Activated CD4-positive, alpha-beta memory T cell treated with anti-CD3 and anti-CD28 coated beads for 36 hours (primary cell): ENCODE measurements at regions of chr11 and their contacts with region 1.

Region 1: DNA sequence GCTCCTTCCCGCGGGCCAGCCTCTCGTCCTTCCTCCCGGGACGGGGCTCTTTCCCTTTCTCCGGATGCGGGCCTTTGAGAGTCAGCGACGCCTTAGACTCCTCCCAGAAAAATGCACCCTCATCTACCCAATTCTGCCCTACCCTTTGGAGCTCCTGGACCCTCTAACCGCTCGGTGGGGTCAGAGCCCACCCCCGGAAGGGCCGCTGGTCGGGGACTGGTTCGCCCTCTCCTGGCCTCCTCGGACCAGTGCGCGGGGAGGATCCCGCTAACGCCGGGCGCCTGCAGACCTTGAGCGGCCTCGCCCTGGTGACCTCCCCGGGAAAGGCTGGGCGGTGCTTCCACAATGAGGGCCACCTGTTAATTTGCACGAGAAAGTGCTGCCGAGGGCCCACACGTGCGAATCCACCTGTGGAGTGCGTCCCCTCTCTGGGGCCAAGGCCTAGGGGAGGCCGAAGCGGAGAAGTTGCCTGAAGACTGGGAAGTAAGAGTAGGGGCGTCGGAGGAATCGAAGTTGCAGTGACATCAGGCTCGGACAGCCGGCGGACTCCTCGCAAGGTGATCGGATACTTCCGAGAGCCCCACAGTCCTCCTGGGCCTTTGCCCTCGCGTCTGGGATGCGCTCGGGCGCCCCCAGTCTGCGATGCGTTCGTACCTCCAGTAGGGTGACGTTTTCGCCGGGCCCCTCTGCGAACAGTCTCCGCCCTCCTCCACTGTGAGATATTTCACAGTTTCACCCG is 61.5 kb downstream of the ENDOD1 start:
- DNase-seq: peak; percentile 95
- H3K4me3 Mint-ChIP-seq: peak overlapping the region; percentile 81
- H3K27ac Mint-ChIP-seq: peak overlapping the region; percentile 88
- H3K4me1 Mint-ChIP-seq: peaks cover 36% of the 10 kb centered on the region
- H3K27me3 Mint-ChIP-seq: no peaks in the 10 kb centered on the region

Region 2: DNA sequence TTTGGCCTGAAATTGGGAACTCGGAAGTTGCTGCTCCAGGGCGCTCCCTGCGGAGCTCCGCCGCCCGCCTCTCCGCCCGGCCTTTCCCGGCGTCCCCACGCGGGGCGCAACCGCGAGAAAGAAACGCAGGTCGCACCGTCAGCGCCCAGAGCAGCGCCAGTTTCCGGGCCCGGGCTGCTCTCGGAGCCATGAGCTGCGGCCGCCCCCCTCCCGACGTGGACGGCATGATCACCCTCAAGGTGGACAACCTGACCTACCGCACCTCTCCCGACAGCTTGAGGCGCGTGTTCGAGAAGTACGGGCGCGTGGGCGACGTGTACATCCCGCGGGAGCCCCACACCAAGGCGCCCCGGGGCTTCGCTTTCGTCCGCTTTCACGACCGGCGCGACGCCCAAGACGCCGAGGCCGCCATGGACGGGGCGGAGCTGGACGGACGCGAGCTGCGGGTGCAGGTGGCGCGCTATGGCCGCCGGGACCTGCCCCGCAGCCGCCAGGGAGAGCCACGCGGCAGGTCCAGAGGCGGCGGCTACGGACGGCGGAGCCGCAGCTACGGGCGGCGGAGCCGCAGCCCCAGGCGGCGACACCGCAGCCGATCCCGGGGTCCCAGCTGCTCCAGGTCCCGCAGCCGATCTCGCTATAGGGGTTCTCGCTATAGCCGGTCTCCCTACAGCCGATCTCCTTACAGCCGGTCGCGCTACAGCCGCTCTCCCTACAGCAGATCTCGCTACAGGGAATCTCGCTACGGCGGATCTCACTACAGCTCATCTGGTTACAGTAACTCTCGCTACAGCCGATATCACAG is 83.9 kb before region 1 on chr11:
- CTCF ChIA-PET with region 1: interaction called, 130 read pairs
- POLR2A ChIA-PET with region 1: interaction called, 18 read pairs
- intact Hi-C with region 1: loop called (anchors 1 kb)
- DNase-seq: peak; percentile 85
- H3K4me3 Mint-ChIP-seq: peak overlapping the region; percentile 87
- H3K27ac Mint-ChIP-seq: peak overlapping the region; percentile 97
- H3K4me1 Mint-ChIP-seq: peaks cover 24% of the 10 kb centered on the region
- H3K27me3 Mint-ChIP-seq: no peaks in the 10 kb centered on the region

Region 3: DNA sequence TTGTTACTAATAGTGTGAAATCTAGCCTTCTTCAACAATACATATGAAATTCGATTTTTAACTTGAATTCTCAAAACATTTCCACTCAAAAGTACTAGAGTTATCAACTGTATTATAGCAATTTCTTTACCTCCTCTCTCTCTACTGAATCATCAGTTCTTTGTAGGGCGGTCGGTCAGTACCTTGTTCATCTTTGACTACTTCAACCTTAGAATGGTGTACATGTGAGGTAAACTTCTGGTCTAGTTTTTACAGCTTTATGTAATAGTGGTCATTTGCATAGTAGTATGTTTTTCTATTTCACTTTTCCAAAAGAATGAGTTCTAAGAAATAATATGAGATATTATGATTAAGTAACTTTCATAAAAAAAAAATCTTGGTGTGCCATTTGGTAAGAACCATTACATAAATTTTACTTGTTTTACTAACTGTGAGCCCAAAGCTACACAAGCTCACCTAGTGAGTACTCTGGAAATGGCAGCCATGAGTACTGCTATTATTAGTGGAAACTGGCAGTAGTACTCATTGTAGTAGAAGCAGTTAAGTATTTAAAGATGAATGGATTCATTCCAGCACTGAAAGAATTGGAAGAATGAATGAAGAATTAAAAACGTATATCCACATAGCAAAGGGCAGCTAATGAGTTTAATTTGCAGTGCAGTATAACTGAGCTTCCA is 49.8 kb after region 1 on chr11:
- CTCF ChIA-PET with region 1: interaction called, 10 read pairs
- POLR2A ChIA-PET with region 1: no interaction called
- intact Hi-C with region 1: no loop called
- DNase-seq: no peak
- H3K4me3 Mint-ChIP-seq: no peak overlapping the region
- H3K27ac Mint-ChIP-seq: no peak overlapping the region
- H3K4me1 Mint-ChIP-seq: peaks cover 66% of the 10 kb centered on the region
- H3K27me3 Mint-ChIP-seq: no peaks in the 10 kb centered on the region

Region 4: DNA sequence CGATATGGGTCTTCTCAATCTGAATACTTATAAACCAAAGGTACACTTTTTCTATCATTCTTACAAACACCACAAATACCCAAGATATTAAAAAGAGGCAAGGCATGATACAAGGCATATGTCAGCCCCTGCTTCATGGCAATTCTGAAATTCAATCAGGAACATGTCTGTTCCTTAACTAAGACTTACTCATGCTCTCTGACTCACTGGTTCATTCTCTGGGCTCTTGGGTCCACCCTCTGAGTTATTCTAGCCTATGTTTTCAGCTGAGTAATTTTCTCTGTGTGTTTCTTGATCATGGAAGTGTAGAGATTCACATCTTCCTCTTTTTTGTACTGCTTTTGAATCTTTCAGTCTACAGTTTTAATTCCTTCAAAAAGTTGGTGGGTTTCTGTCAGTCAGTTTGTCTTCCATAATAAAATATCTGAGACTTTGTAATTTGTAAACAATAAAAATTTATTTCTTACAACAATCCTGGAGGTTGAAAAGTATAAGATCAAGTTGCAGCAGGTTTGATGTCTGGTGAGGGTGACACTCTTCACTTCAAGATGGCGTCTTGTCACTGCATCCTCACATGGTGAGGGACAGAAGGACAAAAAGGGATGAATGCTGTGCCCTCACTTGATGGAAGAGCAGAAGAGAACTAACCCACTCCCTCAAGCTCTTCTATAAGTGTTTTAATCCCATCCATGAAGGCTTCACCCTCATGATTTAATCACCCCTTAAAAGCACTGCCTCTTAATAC is 426.8 kb after region 1 on chr11:
- CTCF ChIA-PET with region 1: no interaction called
- POLR2A ChIA-PET with region 1: no interaction called
- intact Hi-C with region 1: loop called (anchors 5 kb)
- DNase-seq: no peak
- H3K4me3 Mint-ChIP-seq: no peak overlapping the region
- H3K27ac Mint-ChIP-seq: no peak overlapping the region
- H3K4me1 Mint-ChIP-seq: peaks cover 13% of the 10 kb centered on the region
- H3K27me3 Mint-ChIP-seq: no peaks in the 10 kb centered on the region

Region 5: DNA sequence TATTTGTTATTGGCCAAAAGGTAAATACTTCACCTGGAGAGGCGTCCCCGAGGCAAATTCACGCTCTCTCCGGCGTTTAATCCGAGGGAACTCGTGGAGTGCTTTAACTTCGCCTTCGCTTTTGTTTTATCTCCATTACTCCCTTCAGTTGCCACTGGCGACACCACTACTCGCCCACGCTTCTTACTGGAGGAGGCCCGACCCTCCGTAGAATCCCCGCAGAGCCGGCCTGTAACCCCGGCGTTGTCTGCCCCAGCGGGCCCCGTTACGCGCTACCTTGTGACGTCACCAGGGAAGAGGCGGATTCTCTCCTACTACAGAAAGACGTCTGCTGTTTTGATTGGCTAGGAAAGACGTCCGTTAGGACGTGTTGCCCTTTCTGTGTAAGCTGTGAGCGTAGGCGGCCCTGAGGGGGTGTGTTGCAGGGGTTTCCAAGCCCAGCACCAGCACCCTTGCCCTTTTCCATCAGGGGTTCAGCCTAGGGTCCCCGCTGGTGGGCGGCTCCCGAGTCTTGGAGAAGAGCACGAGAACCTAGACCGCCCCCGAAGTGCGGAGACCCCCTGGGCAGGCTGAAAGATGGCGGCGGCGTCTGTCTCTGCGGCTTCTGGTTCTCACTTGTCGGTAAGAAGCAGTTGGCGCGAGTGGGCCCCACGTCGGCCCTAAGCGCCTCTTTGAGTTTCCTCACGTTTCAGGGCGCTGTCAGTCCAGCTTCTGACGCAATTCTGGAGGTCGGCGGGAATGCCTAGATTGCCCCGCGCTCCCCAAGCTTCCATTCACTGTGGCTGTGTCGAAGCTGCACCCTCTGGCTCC is 639.2 kb after region 1 on chr11 and contains the start of gene CEP57:
- CTCF ChIA-PET with region 1: interaction called, 17 read pairs
- POLR2A ChIA-PET with region 1: interaction called, 7 read pairs
- intact Hi-C with region 1: loop called (anchors 1 kb)
- DNase-seq: peak; percentile 97
- H3K4me3 Mint-ChIP-seq: peak within 1 kb of the TSS; percentile 95
- H3K27ac Mint-ChIP-seq: peak within 1 kb of the TSS; percentile 100
- H3K4me1 Mint-ChIP-seq: peaks cover 55% of the 10 kb centered on the region
- H3K27me3 Mint-ChIP-seq: no peaks in the 10 kb centered on the region
- total RNA-seq, gene CEP57: 115 to 117 TPM

Region 6: DNA sequence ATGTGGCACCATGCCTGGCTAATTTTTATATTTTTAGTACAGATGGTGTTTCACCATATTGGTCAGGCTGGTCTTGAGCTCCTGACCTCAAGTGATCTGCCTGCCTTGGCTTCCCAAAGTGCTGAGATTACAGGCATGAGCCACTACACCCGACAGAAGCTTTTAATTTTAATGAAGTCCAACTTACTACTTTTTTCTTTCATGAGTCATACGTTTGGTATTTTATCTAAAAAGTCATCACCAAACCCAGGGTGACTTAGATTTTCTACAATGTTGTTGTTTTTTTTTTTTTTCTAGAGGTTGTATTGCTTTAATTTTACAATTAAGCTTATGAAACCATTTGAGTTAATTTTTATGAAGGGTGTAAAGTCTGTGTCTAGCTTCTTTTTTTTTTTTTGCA is 1273.6 kb after region 1 on chr11:
- CTCF ChIA-PET with region 1: interaction called, 5 read pairs
- POLR2A ChIA-PET with region 1: interaction called, 4 read pairs
- intact Hi-C with region 1: loop called (anchors 2 kb)
- DNase-seq: no peak
- H3K4me3 Mint-ChIP-seq: no peak overlapping the region
- H3K27ac Mint-ChIP-seq: no peak overlapping the region
- H3K4me1 Mint-ChIP-seq: peaks cover 8% of the 10 kb centered on the region
- H3K27me3 Mint-ChIP-seq: peaks cover 26% of the 10 kb centered on the region

Region 7: DNA sequence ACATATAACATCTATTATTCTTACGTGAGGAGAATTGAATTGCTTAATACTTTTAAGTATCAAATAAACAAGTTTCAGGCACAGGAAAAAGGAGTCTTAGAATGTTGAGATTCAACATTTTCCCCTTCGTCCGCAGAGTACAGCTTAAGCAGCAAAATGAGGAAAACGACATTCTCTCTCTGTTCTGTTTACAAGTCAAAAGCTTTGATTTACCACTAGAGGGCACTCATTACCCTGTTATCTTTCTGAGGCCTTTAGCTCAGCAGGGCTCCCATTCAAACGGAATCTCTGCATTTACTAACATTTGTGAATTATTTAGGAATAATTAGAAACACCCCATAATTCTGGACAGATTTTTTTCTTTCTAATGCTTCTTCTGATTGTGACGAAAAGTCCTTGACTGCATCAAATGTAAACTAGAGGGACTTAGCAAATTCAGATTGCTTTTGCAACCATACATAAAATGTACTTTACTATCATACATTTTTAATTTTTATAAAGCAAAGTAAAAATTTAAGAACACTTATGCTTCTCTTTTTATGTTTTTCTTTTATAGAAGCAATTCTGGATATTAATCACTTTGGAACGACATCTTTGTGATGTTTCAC is 1313.7 kb after region 1 on chr11:
- CTCF ChIA-PET with region 1: no interaction called
- POLR2A ChIA-PET with region 1: no interaction called
- intact Hi-C with region 1: no loop called
- DNase-seq: no peak
- H3K4me3 Mint-ChIP-seq: no peak overlapping the region
- H3K27ac Mint-ChIP-seq: no peak overlapping the region
- H3K4me1 Mint-ChIP-seq: peaks cover 10% of the 10 kb centered on the region
- H3K27me3 Mint-ChIP-seq: no peaks in the 10 kb centered on the region